IMR-90 (cell line): ENCODE measurements at regions of chr22 and their contacts with region 1.

Region 1: DNA sequence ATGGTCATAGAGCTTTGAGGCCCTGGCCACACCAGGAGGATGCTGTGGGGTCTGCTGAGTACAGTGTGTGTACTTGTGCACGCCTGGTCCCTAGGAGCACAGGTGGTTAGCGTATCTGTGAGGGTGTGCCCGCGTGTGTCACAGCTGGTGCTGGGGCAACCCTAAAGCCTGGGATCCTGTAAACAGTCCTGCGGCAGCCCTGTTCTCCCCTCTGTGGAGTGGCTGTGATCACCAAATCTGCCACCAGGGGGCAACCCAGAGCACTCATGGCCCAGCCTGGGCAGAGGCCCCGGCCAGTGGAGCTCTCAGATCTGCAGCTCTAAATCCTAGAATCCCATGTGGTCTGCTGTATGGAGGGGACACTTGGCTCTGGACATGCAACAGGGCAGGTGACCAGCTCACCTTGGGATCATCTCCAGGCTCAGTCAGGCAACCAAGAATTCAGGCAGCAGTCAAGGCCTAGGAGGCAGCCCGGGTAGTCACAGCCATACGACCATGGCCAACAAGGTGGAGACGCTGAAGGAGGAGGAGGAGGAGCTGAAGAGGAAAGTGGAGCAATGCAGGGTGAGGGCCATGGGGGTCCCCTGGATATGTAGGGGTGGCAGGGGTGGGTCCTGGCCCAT is 3.9 kb downstream of the SH3BP1 start:
- DNase-seq: peak; percentile 57
- ATAC-seq: peak; percentile 92
- H3K4me3 ChIP-seq: no peak overlapping the region
- H3K27ac ChIP-seq: no peak overlapping the region
- H3K4me1 ChIP-seq: peaks cover 15% of the 10 kb centered on the region
- H3K27me3 ChIP-seq: no peaks in the 10 kb centered on the region
- CTCF ChIP-seq: peak; percentile 82
- POLR2A ChIP-seq: no peak
- RAD21 ChIP-seq: peak; percentile 82

Region 2: DNA sequence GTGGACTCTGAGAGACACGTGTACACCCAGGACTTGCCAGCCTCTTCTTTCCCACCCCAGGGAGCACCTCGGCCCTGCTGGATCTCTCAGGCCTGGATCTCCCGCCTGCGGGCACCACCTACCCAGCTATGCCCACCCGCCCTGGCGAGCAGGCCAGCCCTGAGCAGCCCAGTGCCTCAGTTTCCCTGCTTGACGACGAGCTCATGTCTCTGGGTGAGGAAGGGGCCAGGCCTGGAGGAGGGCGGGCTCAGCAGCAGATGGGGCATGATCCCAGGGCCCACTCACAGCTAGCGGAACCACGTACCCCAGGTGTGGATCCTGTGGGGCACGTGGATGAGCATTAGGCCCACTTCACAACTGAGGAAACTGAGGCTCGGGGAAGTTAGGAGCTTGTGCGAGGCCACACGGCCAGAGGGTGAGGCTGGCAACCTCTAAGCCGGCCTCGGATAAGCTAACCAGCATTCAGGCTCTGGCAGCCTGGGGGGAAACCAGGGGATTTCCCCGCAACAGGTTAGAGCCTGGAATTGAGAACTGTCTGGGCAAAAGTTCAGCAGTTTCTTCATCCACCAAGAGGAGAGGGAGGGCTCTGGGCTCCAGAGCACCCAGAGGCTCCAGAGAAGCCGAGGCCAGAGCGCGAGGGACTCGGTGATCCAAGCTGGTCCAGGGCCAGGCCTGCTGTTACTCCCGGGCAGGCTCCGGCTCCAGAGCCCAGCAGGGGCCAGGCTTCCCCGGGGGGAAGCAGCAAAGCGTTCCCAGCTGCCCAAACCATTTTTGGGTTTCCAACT is 17.4 kb before region 1 on chr22:
- CTCF ChIA-PET with region 1: no interaction called
- POLR2A ChIA-PET with region 1: no interaction called
- dilution Hi-C with region 1: no loop called
- in situ Hi-C with region 1: no loop called
- intact Hi-C with region 1: no loop called
- DNase-seq: peak; percentile 43
- ATAC-seq: no peak
- H3K4me3 ChIP-seq: no peak overlapping the region
- H3K27ac ChIP-seq: no peak overlapping the region; the same call in 1 of the 2 replicates
- H3K4me1 ChIP-seq: peaks cover 3% of the 10 kb centered on the region; the same call in 1 of the 2 replicates
- H3K27me3 ChIP-seq: no peaks in the 10 kb centered on the region
- CTCF ChIP-seq: no peak
- POLR2A ChIP-seq: no peak
- RAD21 ChIP-seq: no peak

Region 3: GRCh38 chr22:37658133-37659065 is 15.1 kb after region 1 on chr22 and contains the start of gene PDXP:
- CTCF ChIA-PET with region 1: interaction called, 12 read pairs
- POLR2A ChIA-PET with region 1: interaction called, 12 read pairs
- dilution Hi-C with region 1: no loop called
- in situ Hi-C with region 1: no loop called
- intact Hi-C with region 1: no loop called
- DNase-seq: peak; percentile 100
- ATAC-seq: peak; percentile 95
- H3K4me3 ChIP-seq: peak within 1 kb of the TSS; percentile 55
- H3K27ac ChIP-seq: peak within 1 kb of the TSS; percentile 74
- H3K4me1 ChIP-seq: peaks cover 22% of the 10 kb centered on the region
- H3K27me3 ChIP-seq: no peaks in the 10 kb centered on the region
- CTCF ChIP-seq: no peak
- POLR2A ChIP-seq: peak; percentile 48; the same call in 1 of the 2 replicates
- RAD21 ChIP-seq: no peak; the same call in 1 of the 2 replicates
- total RNA-seq, gene PDXP: 5.4 and 5.6 TPM in 2 replicates

Region 4: DNA sequence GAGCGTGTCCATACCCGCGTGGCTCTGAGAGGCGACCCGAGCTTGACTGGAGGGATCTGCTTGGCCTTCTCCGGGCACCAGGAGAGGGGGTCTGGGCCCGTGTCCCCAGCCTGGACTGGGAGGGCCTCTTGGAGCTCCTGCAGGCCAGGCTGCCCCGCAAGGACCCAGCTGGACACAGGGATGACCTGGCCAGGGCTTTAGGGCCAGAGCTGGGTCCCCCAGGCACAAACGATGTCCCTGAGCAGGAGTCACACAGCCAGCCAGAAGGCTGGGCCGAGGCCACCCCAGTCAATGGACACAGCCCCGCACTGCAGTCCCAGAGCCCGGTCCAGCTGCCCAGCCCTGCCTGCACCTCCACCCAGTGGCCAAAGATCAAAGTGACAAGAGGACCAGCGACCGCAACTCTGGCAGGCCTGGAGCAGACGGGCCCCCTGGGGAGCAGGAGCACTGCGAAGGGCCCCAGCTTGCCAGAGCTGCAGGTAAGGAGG is 91.7 kb after region 1 on chr22:
- CTCF ChIA-PET with region 1: no interaction called
- POLR2A ChIA-PET with region 1: no interaction called
- dilution Hi-C with region 1: no loop called
- in situ Hi-C with region 1: no loop called
- intact Hi-C with region 1: loop called (anchors 5 kb)
- DNase-seq: no peak
- ATAC-seq: peak; percentile 60
- H3K4me3 ChIP-seq: no peak overlapping the region
- H3K27ac ChIP-seq: no peak overlapping the region
- H3K4me1 ChIP-seq: peaks cover 11% of the 10 kb centered on the region
- H3K27me3 ChIP-seq: no peaks in the 10 kb centered on the region
- CTCF ChIP-seq: peak; percentile 37
- POLR2A ChIP-seq: no peak
- RAD21 ChIP-seq: peak; percentile 47

Region 5: GRCh38 chr22:37792494-37792893 is 149.2 kb after region 1 on chr22:
- CTCF ChIA-PET with region 1: interaction called, 3 read pairs
- POLR2A ChIA-PET with region 1: no interaction called
- dilution Hi-C with region 1: no loop called
- in situ Hi-C with region 1: loop called (anchors 5 kb)
- intact Hi-C with region 1: loop called (anchors 1 kb)
- DNase-seq: no peak
- ATAC-seq: no peak
- H3K4me3 ChIP-seq: no peak overlapping the region
- H3K27ac ChIP-seq: no peak overlapping the region
- H3K4me1 ChIP-seq: no peaks in the 10 kb centered on the region
- H3K27me3 ChIP-seq: no peaks in the 10 kb centered on the region
- CTCF ChIP-seq: no peak
- POLR2A ChIP-seq: no peak
- RAD21 ChIP-seq: no peak

Region 6: DNA sequence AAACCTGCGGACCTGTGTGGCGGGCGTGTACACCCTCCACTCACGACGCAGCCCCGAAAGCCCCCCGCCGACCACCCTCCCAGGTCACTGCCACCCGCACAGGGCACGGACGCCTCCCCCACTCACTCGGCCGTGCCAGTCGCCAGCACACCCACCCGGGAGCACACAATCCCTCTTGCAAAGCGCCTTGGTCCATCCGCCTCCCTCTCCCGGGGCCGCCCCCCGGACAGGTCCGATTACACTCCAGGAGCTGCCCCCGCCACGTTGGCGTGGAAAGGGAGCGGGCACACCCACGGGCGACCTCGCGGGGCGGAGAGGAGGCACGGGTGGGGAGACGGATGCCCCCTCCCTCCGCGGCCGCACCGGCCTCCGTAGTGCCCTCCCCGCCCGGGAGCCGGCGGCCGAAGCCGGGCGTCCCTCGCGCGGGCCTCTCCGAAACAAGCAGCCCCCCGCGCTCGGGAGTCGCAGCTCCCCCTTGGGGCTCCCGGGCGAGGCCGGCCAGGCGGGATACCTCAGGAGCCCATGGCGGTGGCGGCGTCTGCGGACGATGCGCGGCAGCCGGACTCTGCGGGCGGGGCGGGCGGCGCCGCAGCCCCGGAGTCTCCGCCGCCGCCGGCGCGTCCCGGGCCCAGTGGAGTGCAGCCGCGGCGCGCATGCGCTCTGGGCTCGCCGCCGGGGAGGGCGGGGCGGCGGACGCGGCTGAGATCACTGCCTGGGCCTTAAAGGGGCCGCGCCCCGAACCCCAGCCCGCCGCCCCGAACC is 629.2 kb after region 1 on chr22 and contains the start of gene TMEM184B:
- CTCF ChIA-PET with region 1: no interaction called
- POLR2A ChIA-PET with region 1: no interaction called
- dilution Hi-C with region 1: no loop called
- in situ Hi-C with region 1: no loop called
- intact Hi-C with region 1: no loop called
- DNase-seq: peak; percentile 58
- ATAC-seq: peak; percentile 95
- H3K4me3 ChIP-seq: peak within 1 kb of the TSS; percentile 96
- H3K27ac ChIP-seq: peak within 1 kb of the TSS; percentile 97
- H3K4me1 ChIP-seq: peaks cover 19% of the 10 kb centered on the region
- H3K27me3 ChIP-seq: no peaks in the 10 kb centered on the region
- CTCF ChIP-seq: no peak
- POLR2A ChIP-seq: peak; percentile 86
- RAD21 ChIP-seq: 0 out of 2 replicates have a peak, but pooled peaks have one; percentile 6
- total RNA-seq, gene TMEM184B: 9.1 and 9.2 TPM in 2 replicates